Activated naive CD4-positive, alpha-beta T cell treated with anti-CD3 and anti-CD28 coated beads for 36 hours (primary cell): ENCODE measurements at regions of chr19 and their contacts with region 1.

Region 1: DNA sequence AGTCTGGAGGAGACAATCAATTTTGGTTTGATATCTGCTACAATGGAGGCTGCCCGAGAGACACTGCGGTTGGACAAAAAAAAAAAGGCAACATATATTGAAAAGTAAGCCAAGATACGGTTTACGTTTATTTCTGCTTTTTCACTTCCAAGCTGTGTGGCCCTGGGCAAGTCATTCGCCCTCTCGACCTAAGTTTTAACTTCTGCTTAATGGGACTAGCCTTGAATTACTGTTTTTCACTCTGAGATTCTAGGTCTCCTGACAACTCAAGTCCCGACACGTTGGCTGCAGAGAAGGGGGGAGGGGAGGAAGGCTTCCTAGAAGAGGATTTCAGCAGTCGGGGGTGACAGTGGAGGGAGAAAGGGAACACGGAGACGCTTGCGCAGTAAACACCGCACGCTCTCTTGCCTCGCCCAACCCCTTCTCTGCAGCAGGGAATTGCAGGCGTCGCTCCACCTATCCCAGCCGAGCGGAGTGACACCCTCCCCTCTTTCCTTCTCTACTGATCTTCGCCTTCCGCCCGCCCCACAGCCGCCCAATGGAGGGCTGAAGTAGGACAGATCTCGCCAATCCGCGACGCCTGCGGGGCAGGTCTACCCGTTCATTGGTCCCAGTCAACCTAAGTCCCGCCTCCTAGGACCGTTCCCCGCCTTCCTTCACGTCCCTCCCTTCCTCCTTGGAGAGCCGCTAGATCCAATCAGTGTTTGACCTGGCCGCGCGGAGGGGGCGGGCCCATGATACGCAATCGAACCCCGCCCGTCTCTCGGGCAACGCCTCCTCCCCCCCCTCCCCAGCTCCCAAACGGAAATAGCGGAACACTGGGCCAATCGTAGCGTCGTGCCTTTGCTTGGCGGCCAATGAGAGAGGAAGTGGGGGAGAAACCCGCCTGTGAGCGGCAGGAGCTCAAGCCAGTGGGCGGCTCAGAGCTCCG is 529 bp upstream of the AP2A1 start:
- DNase-seq: peak; percentile 100
- H3K4me3 Mint-ChIP-seq: peak overlapping the region; percentile 94
- H3K27ac Mint-ChIP-seq: peak overlapping the region; percentile 92
- H3K4me1 Mint-ChIP-seq: peaks cover 30% of the 10 kb centered on the region
- H3K27me3 Mint-ChIP-seq: no peaks in the 10 kb centered on the region

Region 2: DNA sequence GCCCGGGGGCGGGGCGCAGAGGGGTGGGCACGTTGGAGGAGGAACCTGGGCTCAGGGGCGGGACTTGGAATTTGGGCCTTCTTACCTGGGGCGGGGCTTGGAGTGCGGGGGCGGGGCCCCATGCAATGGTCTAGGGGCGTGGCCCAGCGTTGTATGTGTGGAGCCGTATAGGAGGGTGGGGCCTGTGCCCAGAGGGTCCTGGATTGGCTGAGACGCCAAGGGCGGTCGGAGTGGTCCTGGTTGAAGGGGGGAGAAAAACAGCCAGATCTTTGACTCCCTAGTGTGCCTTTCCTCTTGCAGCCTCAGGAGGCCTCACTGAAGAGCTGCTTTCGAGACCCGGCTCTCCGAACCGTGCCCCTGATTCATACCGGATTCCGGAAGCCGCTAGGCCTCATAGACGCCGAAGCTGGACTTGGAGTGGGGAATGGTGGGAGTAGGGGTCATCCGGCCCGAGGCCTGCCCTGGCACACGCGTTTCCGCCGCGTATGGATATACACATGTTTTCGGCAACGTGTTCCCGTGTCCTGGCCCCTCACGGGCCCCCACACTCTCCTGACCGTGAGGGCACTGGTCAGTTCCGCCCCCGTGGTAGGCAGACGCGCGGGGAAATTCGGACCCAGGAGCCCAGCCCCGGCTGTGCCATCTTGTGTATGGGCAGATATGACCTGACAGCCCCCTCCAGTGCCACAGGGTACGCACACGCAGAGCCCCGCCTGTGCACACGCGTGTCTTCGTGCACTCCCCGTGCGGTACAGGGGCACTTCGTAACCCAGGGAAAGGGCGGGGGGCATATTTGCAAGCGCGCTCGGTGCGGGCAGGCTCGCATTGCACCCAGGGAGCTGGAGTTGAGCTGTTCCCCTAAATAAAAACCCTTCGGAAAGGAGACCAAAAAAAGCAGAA is 176.0 kb before region 1 on chr19:
- CTCF ChIA-PET with region 1: no interaction called
- intact Hi-C with region 1: loop called (anchors 1 kb)
- DNase-seq: peak; percentile 96
- H3K4me3 Mint-ChIP-seq: peak overlapping the region; percentile 77
- H3K27ac Mint-ChIP-seq: peak overlapping the region; percentile 85
- H3K4me1 Mint-ChIP-seq: peaks cover 25% of the 10 kb centered on the region
- H3K27me3 Mint-ChIP-seq: no peaks in the 10 kb centered on the region

Region 3: DNA sequence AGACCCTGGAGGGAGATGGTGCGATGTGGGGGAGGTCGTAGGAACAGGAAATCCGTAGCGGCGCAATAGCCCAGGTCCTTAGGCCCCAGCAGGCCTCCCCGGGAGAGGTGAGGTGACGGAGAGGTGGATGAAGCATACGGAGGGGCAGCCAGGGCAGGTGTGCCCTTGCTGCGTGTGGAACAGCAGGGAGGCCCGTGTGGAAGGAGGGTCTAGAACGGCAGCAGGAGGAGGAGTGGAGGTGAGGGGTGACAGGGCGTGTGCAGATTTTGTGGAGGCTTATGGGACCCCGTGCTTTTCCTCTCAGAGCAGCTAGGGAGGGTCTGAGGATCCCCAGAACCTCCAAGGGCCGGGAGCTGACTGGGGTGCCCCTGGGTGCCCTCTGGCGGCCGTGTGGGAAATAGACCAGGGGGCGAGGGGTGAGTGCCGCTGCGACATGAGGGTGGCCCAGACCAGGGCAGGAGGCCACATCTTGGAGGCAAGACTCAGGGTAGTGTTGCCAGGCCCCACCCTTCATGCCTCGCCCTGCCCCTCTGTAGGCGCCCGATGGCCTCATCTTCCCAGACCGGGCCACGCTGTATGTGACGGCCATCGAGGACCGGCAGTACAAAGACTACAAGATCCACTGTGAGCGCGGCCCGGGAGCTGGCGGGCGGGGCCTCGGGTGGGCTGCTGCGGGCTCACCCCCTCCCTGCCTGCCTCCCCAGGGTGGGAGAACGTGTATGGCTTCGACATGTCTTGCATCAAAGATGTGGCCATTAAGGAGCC is 81.9 kb before region 1 on chr19:
- CTCF ChIA-PET with region 1: no interaction called
- intact Hi-C with region 1: no loop called
- DNase-seq: no peak
- H3K4me3 Mint-ChIP-seq: no peak overlapping the region
- H3K27ac Mint-ChIP-seq: no peak overlapping the region
- H3K4me1 Mint-ChIP-seq: peaks cover 35% of the 10 kb centered on the region
- H3K27me3 Mint-ChIP-seq: no peaks in the 10 kb centered on the region

Region 4: GRCh38 chr19:49808711-49809159 is 42.5 kb after region 1 on chr19:
- CTCF ChIA-PET with region 1: interaction called, 3 read pairs
- intact Hi-C with region 1: loop called (anchors 1 kb)
- DNase-seq: peak; percentile 92
- H3K4me3 Mint-ChIP-seq: peak overlapping the region; percentile 74
- H3K27ac Mint-ChIP-seq: peak overlapping the region; percentile 46
- H3K4me1 Mint-ChIP-seq: peaks cover 35% of the 10 kb centered on the region
- H3K27me3 Mint-ChIP-seq: no peaks in the 10 kb centered on the region

Region 5: DNA sequence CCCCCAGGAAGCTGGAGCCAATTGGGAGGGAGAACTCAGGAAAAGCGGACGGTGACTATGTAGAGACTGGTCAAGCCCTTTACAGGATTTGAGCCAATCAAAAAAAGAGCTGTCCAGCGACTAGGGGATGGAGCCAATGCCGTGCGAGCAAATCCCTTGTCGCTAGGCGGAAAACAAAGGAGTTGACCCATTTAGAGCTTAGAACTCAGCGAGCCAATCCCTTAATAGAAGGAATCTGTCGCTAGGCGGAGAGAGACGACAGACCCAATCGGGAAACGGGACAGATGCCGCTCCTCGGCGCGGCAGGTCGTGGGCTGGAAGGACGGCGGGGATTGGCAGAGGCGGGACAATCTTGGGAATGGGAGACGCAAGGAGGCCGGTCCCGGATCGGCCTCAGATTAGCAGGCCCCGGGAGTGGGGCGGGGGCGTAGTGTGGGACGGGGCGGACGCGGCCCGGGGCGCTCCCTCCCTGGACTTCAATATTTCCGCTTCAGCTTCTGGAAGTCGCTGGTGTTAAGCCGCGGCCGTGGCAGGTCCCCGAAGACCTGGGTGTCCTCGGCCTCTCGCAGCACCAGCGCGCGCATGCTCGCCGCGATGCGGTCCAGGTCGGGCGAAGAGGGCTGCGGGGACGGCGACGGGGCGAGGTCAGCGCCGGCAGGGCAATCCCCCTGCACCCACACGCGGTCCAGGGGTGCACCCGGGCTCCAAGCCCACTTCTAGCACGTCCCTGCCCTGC is 103.3 kb after region 1 on chr19:
- CTCF ChIA-PET with region 1: no interaction called
- intact Hi-C with region 1: loop called (anchors 1 kb)
- DNase-seq: peak; percentile 95
- H3K4me3 Mint-ChIP-seq: no peak overlapping the region
- H3K27ac Mint-ChIP-seq: no peak overlapping the region
- H3K4me1 Mint-ChIP-seq: peaks cover 47% of the 10 kb centered on the region
- H3K27me3 Mint-ChIP-seq: no peaks in the 10 kb centered on the region

Region 6: GRCh38 chr19:49896863-49897621 is 130.8 kb after region 1 on chr19 and contains the start of gene IL4I1:
- CTCF ChIA-PET with region 1: no interaction called
- intact Hi-C with region 1: loop called (anchors 1 kb)
- DNase-seq: peak; percentile 85
- H3K4me3 Mint-ChIP-seq: peak within 1 kb of the TSS; percentile 67
- H3K27ac Mint-ChIP-seq: peak within 1 kb of the TSS; percentile 97
- H3K4me1 Mint-ChIP-seq: peaks cover 31% of the 10 kb centered on the region
- H3K27me3 Mint-ChIP-seq: no peaks in the 10 kb centered on the region
- total RNA-seq, gene IL4I1: 7.2 to 7.5 TPM

Region 7: GRCh38 chr19:49983645-49984229 is 217.5 kb after region 1 on chr19:
- CTCF ChIA-PET with region 1: no interaction called
- intact Hi-C with region 1: loop called (anchors 2 kb)
- DNase-seq: peak; percentile 90
- H3K4me3 Mint-ChIP-seq: no peak overlapping the region
- H3K27ac Mint-ChIP-seq: no peak overlapping the region
- H3K4me1 Mint-ChIP-seq: peaks cover 9% of the 10 kb centered on the region
- H3K27me3 Mint-ChIP-seq: no peaks in the 10 kb centered on the region